Gastrocnemius medialis (tissue), 4 donors: ENCODE measurements at regions of chr1 and their contacts with region 1.

Region 1: GRCh38 chr1:247103859-247104591 is at the start of gene ZNF669:
- DNase-seq: peak; percentile 97 to 98
- ATAC-seq: peak; percentile 99
- H3K4me3 ChIP-seq: peak within 1 kb of the TSS; percentile 73 to 95 (median 90)
- H3K27ac ChIP-seq: peak within 1 kb of the TSS; percentile 92 to 94 (median 94)
- H3K4me1 ChIP-seq: peaks cover 12 to 15% of the 10 kb centered on the region in 2 donors
- H3K27me3 ChIP-seq: no peaks in the 10 kb centered on the region
- CTCF ChIP-seq: no peak
- POLR2A ChIP-seq: peak; percentile 73 to 77
- total RNA-seq, gene ZNF669: 1.3 to 7.3 (median 2.7) TPM

Region 2: GRCh38 chr1:246931549-246932365 is 172.3 kb before region 1 on chr1 and contains the start of gene AHCTF1:
- in situ Hi-C with region 1: loop called in 1 of 4 experiments (anchors 10 kb)
- intact Hi-C with region 1: loop called (anchors 1 kb)
- DNase-seq: peak; percentile 94 to 97
- ATAC-seq: peak; percentile 95 to 96
- H3K4me3 ChIP-seq: peak within 1 kb of the TSS; percentile 89 to 100 (median 97)
- H3K27ac ChIP-seq: peak within 1 kb of the TSS; percentile 96 to 100 (median 99)
- H3K4me1 ChIP-seq: peaks cover 30 to 34% of the 10 kb centered on the region in 2 donors
- H3K27me3 ChIP-seq: no peaks in the 10 kb centered on the region
- CTCF ChIP-seq: peak in 1 of 5 experiments; percentile 10
- POLR2A ChIP-seq: peak; percentile 95 to 96
- total RNA-seq, gene AHCTF1: 21.7 to 28.5 (median 24.7) TPM

Region 3: GRCh38 chr1:247078261-247079140 is 25.5 kb before region 1 on chr1 and contains the start of gene ZNF670:
- in situ Hi-C with region 1: no loop called
- intact Hi-C with region 1: loop called (anchors 1 kb)
- DNase-seq: peak; percentile 91 to 93
- ATAC-seq: peak; percentile 100
- H3K4me3 ChIP-seq: peak within 1 kb of the TSS; percentile 78 to 100 (median 90)
- H3K27ac ChIP-seq: peak within 1 kb of the TSS; percentile 75 to 85 (median 78)
- H3K4me1 ChIP-seq: peaks cover 8 to 14% of the 10 kb centered on the region in 2 donors
- H3K27me3 ChIP-seq: no peaks in the 10 kb centered on the region
- CTCF ChIP-seq: no peak
- POLR2A ChIP-seq: peak; percentile 55 to 64
- total RNA-seq, gene ZNF670: 0.49 to 1.3 (median 0.52) TPM

Region 4: DNA sequence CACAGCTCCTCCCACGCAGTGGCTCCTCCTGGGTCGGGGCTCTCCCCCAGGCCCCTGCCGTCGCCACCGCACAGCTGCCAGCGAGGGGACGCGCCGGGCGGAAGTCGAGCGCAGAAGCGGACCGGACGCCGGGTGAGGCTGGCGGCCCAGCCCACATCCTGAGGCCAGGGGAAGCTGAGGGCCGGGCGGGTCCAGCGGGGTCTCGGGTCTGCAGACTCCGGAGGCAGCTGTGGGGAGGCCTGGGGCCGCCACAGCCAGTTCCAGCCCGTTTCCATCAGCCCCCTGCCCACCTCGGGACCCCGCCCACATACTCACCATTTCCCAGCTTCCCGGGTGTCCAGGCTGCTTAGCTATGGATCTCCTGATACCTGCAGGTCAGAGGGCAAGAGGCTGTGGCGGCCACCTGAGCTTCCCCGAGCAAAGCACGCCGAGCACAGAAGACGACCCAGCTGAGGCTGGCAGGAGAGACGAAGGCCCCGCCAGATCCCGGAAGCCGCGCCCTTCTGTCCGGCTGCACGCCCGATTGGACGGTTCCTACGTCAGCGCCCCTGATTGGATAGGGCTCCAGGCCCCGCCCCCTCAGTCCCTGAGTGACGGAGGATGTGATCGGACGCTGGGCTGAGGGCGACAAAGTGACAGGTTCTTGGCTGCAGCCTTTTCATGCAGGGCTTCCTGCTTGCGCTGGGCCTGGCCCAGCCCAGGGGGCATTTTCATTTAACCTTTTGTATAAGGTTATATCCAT is 106.5 kb after region 1 on chr1:
- in situ Hi-C with region 1: no loop called
- intact Hi-C with region 1: loop called (anchors 2 kb)
- DNase-seq: peak; percentile 96 to 97
- ATAC-seq: peak; percentile 99 to 100
- H3K4me3 ChIP-seq: peak overlapping the region; percentile 73 to 98 (median 88)
- H3K27ac ChIP-seq: peak overlapping the region; percentile 77 to 89 (median 85)
- H3K4me1 ChIP-seq: peaks cover 16 to 18% of the 10 kb centered on the region in 2 donors
- H3K27me3 ChIP-seq: no peaks in the 10 kb centered on the region
- CTCF ChIP-seq: no peak
- POLR2A ChIP-seq: peak; percentile 68 to 71

Region 5: DNA sequence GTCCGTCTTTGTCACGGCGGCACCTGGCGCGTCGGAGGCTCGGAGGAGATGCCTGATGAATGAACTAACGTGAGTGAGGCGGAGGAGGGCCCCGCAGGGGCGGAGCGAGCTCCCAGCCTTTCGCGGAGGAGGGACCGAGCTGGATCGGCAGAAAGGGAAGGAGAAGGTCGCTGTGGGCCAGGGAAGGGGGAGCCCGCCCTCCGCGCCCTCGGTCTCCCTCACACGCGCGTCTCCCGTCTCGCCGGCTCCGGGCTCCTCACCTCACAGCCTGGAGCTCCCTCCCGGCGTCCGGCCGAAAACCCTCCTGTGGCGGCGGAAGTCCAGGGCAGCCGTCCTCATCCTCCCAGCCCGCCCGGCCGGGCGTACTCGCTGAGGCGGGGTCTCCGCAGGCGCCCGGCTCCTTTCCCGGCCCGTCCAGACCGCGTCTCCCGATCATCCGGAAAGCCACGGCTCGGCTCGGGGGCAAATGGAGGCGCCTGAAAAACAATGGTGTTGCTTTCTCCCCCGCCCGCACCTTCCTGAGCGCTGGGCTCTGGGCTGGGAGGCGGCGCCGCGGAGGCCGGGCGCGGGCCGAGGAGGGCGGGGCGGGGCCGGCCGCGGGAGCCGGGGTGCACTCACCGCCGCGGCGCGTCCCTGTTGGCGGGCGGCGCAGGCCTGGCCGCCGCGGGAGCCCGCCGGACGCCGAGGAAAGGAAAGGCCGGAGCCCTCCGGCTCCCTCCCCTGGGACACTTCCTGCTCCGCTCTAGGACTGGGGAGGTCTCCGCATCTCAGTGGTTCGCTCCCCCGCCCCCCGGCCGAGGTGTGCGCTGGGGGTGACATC is 227.4 kb after region 1 on chr1 and contains the start of gene ZNF496:
- in situ Hi-C with region 1: no loop called
- intact Hi-C with region 1: loop called (anchors 5 kb)
- DNase-seq: peak; percentile 84 to 88
- ATAC-seq: peak; percentile 92 to 93
- H3K4me3 ChIP-seq: peak within 1 kb of the TSS; percentile 92 to 95 (median 94)
- H3K27ac ChIP-seq: peak within 1 kb of the TSS; percentile 86 to 95 (median 90)
- H3K4me1 ChIP-seq: peaks cover 23 to 26% of the 10 kb centered on the region in 2 donors
- H3K27me3 ChIP-seq: no peaks in the 10 kb centered on the region
- CTCF ChIP-seq: no peak
- POLR2A ChIP-seq: peak in 1 of 2 donors; percentile 51
- total RNA-seq, gene ZNF496: 34.2 to 47.4 (median 39.7) TPM